ENCODE measurements at regions of chr2 and their contacts with region 1.

Region 1: DNA sequence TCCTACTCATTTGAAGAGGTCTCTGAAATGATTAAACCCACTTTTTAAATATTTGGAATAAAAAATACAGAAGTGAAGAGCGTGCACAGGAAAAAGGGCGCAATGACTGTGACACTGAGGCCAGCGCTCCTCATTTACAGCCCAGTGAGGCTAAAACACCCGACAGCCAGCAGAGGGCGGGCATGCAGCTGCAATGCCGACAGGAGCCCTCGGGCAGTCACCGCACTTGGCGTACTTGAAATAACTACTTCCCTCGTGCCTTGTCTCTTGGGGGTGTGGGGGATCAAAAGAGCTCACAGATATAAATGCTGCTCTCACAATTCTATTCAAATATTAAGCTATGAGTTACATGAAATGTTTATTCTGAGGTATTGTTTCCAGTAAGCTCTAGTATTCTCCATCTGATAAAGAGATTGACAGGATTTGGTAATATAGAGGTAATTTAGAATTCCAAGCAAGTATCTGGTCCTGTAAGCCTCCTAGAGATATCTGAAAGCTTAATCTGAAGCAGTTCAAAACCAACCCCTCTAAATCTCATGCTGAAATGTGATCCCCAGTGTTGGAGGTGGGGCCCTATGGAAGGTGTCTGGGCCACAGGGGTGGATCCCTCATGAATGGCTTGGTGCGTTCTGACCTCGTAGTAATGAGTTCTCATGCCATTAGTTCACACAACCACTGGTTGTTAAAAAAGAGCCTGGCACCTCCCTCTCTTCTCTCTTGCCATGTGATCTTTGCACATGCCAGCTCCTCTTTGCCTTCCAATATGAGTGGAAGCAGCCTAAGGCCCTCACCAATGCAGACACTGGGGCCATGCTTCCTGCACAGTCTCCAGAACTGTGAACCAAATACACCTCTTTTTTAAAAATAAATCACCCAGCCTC is 93.6 kb downstream of the ZAP70 start:
- DNase-seq: peak; percentile 85 to 88
- H3K4me3 ChIP-seq: no peak overlapping the region
- H3K27ac ChIP-seq: peak overlapping the region; percentile 7 to 34
- H3K4me1 ChIP-seq: peaks cover 0 to 5% (median 0%) of the 10 kb centered on the region in 4 donors
- H3K27me3 ChIP-seq: no peaks in the 10 kb centered on the region
- CTCF ChIP-seq: peak; percentile 84 to 94

Region 2: GRCh38 chr2:97728091-97728731 is 78.8 kb before region 1 on chr2:
- intact Hi-C with region 1: no loop called
- DNase-seq: no peak
- H3K4me3 ChIP-seq: no peak overlapping the region
- H3K27ac ChIP-seq: no peak overlapping the region
- H3K4me1 ChIP-seq: no peaks in the 10 kb centered on the region
- H3K27me3 ChIP-seq: peaks cover 0 to 13% of the 10 kb centered on the region in 2 donors
- CTCF ChIP-seq: no peak

Region 3: DNA sequence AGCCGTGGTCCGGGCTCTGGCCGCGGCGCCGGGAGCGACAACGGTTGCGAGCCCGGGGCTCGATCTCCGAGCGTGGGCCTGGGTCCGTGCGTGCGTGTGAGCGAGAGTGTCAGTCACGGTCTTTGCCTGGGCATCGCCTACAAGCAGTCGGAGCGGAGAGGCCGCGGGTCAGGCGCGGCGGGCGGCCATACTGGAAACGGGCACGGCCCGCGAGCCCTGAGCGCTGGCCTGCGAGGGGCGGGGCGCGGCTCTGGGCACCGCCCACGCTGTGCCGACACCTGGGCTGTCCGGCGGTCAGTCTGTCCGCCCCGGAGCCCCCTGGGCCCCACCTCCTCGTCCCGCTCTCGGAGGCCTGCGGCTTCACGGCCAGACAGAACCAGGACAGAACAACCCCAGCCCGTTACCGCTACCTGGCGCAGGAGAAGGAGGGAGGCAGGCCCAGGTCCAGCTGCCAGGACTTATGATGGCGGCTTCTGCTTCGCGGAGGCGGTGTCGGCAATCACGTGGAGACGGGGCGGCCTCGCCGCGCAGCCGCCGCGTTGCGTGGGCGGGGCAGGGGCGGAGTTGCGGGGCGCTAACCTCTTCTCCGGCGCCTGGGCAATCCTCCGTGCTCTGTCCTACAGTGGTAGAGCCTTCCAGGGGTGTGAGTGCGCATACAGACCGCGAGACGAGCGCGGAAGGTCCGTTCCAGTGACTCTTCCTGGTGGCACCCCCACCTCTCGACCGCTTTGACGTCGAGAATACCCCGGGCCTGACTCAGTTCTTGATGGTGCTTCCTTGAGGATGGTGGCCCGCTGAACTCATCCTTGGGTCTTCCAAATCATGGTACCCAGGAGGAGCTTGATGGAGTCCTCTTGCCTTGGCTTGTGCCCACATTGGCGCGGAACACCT is 189.0 kb after region 1 on chr2 and contains the start of gene TMEM131:
- intact Hi-C with region 1: loop called (anchors 10 kb)
- DNase-seq: peak; percentile 92 to 95
- H3K4me3 ChIP-seq: peak within 1 kb of the TSS; percentile 78 to 79
- H3K27ac ChIP-seq: peak within 1 kb of the TSS; percentile 93 to 97
- H3K4me1 ChIP-seq: peaks cover 0 to 35% (median 10%) of the 10 kb centered on the region in 4 donors
- H3K27me3 ChIP-seq: no peaks in the 10 kb centered on the region
- CTCF ChIP-seq: no peak

Region 4: DNA sequence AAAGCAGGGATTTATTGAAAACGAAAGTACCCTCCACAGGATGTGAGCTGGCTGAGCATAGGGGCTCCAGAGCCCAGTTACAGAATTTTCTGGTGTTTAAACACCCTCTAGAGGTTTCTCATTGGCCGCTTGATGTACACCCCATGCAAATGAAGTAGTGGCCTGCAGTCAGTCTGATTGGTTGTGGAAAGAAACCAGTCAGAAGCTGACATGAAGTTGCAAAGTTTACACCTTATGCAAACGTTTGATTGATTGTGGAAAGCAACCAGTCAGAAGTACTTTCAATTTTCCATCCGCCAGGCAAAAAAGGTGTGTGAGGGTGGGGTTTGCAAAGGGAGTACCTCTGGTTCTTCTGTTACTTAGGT is 342.3 kb after region 1 on chr2:
- intact Hi-C with region 1: loop called (anchors 10 kb)
- DNase-seq: peak in 1 of 2 donors; percentile 39
- H3K4me3 ChIP-seq: peak overlapping the region; percentile 38 to 41
- H3K27ac ChIP-seq: peak overlapping the region; percentile 28 to 68
- H3K4me1 ChIP-seq: peaks cover 0 to 44% (median 0%) of the 10 kb centered on the region in 4 donors
- H3K27me3 ChIP-seq: no peaks in the 10 kb centered on the region
- CTCF ChIP-seq: no peak

Region 5: GRCh38 chr2:98269830-98270229 is 462.9 kb after region 1 on chr2:
- intact Hi-C with region 1: loop called (anchors 10 kb)
- DNase-seq: no peak
- H3K4me3 ChIP-seq: no peak overlapping the region
- H3K27ac ChIP-seq: peak overlapping the region; percentile 29 to 65
- H3K4me1 ChIP-seq: peaks cover 0 to 29% (median 13%) of the 10 kb centered on the region in 4 donors
- H3K27me3 ChIP-seq: no peaks in the 10 kb centered on the region
- CTCF ChIP-seq: no peak

Region 6: DNA sequence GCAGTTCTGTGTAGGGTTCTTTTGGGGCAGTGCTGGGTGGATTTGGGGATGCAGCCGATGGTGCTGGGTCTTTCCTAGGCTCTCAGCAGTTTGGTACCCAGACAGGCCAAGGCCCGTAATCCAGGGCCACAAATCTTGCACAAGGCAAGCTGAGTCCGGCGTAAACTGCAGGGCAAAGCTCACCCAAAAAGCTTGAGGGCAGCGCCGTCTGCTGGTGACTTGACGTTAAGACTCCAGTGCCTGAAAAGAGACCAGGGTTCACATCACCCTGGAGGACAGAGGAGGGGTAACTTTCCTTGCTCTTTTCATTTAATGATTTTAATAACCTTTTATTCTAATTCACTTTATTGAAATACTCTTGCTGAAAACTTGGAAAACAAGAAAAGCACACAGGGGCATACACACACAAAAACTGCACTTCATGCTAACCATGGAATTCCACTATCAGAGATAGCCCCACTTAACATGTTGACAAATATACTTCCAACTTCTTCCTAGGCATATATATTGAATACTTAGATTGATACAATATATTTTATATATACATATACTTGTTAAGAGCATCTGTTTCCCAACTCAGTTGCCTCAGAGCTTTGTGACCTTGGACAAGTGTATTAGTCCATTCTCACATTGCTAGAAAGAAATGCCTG is 578.2 kb after region 1 on chr2:
- intact Hi-C with region 1: loop called (anchors 2 kb)
- DNase-seq: peak; percentile 63 to 79
- H3K4me3 ChIP-seq: no peak overlapping the region
- H3K27ac ChIP-seq: no peak overlapping the region
- H3K4me1 ChIP-seq: no peaks in the 10 kb centered on the region
- H3K27me3 ChIP-seq: peaks cover 0 to 9% of the 10 kb centered on the region in 2 donors
- CTCF ChIP-seq: peak; percentile 83 to 91